AG04450 (cell line): ENCODE measurements at regions of chr3 and their contacts with region 1.

Region 1: GRCh38 chr3:171841620-171842000 is 1.5 kb upstream of the TMEM212 start:
- DNase-seq: no peak
- H3K4me3 ChIP-seq: no peak overlapping the region
- H3K27ac ChIP-seq: no peak overlapping the region
- H3K27me3 ChIP-seq: no peaks in the 10 kb centered on the region
- CTCF ChIP-seq: no peak

Region 2: GRCh38 chr3:171829841-171830517 is 11.6 kb before region 1 on chr3:
- CTCF ChIA-PET with region 1: interaction called, 12 read pairs
- POLR2A ChIA-PET with region 1: no interaction called
- DNase-seq: no peak
- H3K4me3 ChIP-seq: no peak overlapping the region
- H3K27ac ChIP-seq: no peak overlapping the region
- H3K27me3 ChIP-seq: no peaks in the 10 kb centered on the region
- CTCF ChIP-seq: peak; percentile 76